MCF 10A (cell line): ENCODE measurements at regions of chr17 and their contacts with region 1.

Region 1: GRCh38 chr17:67746704-67747571 is 29.2 kb downstream of the NOL11 start:
- DNase-seq: no peak
- H3K4me3 Mint-ChIP-seq: no peak overlapping the region
- H3K27ac Mint-ChIP-seq: no peak overlapping the region
- H3K4me1 Mint-ChIP-seq: no peaks in the 10 kb centered on the region
- H3K27me3 Mint-ChIP-seq: no peaks in the 10 kb centered on the region
- CTCF ChIP-seq: no peak

Region 2: DNA sequence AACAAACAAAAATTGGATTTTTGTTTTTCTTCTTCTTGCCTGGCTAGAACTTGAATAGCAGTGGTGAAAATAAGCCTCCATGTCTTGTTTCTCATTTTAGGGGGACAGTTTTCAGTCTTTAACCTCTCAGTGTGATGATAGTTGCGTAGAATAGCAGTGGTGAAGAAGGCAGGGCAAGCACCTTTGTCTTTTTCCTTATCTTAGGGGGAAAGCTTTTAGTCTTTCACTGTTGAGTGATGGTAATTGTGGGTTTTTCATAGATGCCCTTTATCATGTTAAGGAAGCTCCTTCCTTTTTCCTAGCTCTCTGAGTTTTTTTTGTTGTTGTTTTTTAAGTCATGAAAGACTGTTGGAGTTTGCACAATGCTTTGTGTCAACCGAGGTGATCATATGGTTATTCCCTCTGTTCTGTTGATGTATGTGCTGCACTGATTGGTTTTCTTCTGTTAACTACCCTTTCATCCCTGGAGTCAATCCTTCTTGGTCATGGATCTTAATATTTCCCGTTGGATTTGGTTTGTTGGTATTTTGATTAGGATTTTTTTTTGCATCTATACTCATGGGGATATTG is 13.5 kb before region 1 on chr17:
- CTCF ChIA-PET with region 1: no interaction called
- POLR2A ChIA-PET with region 1: interaction called, 11 read pairs
- intact Hi-C with region 1: no loop called
- DNase-seq: no peak
- H3K4me3 Mint-ChIP-seq: no peak overlapping the region
- H3K27ac Mint-ChIP-seq: peak overlapping the region; percentile 70
- H3K4me1 Mint-ChIP-seq: no peaks in the 10 kb centered on the region
- H3K27me3 Mint-ChIP-seq: no peaks in the 10 kb centered on the region
- CTCF ChIP-seq: no peak